Activated B cell treated with CpG ODN at 0.5 μM for 24 hours (primary cell): ENCODE measurements at regions of chr3 and their contacts with region 1.

Region 1: GRCh38 chr3:34046154-34046553 is 247.7 kb downstream of the PDCD6IP start:
- DNase-seq: no peak
- ATAC-seq: no peak
- H3K4me3 Mint-ChIP-seq: no peak overlapping the region
- H3K27ac Mint-ChIP-seq: no peak overlapping the region
- H3K4me1 Mint-ChIP-seq: no peaks in the 10 kb centered on the region
- H3K27me3 Mint-ChIP-seq: no peaks in the 10 kb centered on the region
- CTCF ChIP-seq: no peak

Region 2: DNA sequence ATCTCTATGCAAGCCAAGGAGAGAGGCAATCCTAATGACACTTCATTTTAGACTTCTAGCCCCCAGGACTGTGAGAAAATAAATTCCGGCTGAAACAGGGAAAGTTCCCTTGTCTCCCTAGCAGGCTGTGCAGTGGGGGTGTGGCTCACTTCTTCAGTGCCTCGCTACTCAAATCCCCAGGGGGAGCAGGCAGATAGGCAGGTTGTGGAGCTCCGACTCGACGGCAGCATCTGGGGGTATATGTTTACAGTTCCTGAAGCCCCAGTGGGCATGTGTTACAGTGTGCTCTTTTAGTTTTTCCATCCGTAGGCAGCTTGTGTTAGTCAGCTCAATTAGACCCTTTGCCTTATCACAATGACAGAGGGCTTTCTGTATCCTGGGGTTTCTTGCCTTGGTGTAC is 588.8 kb after region 1 on chr3:
- CTCF ChIA-PET with region 1: no interaction called
- POLR2A ChIA-PET with region 1: no interaction called
- intact Hi-C with region 1: no loop called
- DNase-seq: no peak
- ATAC-seq: no peak
- H3K4me3 Mint-ChIP-seq: no peak overlapping the region
- H3K27ac Mint-ChIP-seq: no peak overlapping the region
- H3K4me1 Mint-ChIP-seq: no peaks in the 10 kb centered on the region
- H3K27me3 Mint-ChIP-seq: no peaks in the 10 kb centered on the region
- CTCF ChIP-seq: no peak

Region 3: DNA sequence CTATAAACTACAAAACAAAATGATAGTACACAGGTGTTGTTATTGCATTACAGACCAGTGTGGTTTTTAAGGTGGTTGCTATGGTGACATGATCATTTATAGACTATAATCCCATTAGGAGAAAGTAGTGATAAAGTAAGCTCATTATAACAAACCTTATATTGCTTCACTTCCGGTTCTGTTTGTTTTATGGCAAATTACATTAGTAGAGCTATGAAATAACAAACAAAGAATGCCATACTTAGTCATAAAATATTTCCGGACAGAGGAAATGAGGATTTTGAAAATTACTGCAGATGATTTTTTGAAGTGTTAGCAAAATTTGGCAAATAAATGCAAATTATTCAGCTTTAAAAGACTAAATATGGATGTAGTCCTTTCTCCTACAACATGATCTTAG is 952.8 kb after region 1 on chr3:
- CTCF ChIA-PET with region 1: no interaction called
- POLR2A ChIA-PET with region 1: no interaction called
- intact Hi-C with region 1: no loop called
- DNase-seq: no peak
- ATAC-seq: no peak
- H3K4me3 Mint-ChIP-seq: no peak overlapping the region
- H3K27ac Mint-ChIP-seq: no peak overlapping the region
- H3K4me1 Mint-ChIP-seq: no peaks in the 10 kb centered on the region
- H3K27me3 Mint-ChIP-seq: no peaks in the 10 kb centered on the region
- CTCF ChIP-seq: no peak

Region 4: GRCh38 chr3:35894735-35895134 is 1848.6 kb after region 1 on chr3:
- CTCF ChIA-PET with region 1: no interaction called
- POLR2A ChIA-PET with region 1: interaction called, 15 read pairs
- intact Hi-C with region 1: no loop called
- DNase-seq: no peak
- ATAC-seq: no peak
- H3K4me3 Mint-ChIP-seq: no peak overlapping the region
- H3K27ac Mint-ChIP-seq: no peak overlapping the region
- H3K4me1 Mint-ChIP-seq: no peaks in the 10 kb centered on the region
- H3K27me3 Mint-ChIP-seq: no peaks in the 10 kb centered on the region
- CTCF ChIP-seq: no peak